Endothelial cell of umbilical vein (primary cell): ENCODE measurements at regions of chr20 and their contacts with region 1.

Region 1: DNA sequence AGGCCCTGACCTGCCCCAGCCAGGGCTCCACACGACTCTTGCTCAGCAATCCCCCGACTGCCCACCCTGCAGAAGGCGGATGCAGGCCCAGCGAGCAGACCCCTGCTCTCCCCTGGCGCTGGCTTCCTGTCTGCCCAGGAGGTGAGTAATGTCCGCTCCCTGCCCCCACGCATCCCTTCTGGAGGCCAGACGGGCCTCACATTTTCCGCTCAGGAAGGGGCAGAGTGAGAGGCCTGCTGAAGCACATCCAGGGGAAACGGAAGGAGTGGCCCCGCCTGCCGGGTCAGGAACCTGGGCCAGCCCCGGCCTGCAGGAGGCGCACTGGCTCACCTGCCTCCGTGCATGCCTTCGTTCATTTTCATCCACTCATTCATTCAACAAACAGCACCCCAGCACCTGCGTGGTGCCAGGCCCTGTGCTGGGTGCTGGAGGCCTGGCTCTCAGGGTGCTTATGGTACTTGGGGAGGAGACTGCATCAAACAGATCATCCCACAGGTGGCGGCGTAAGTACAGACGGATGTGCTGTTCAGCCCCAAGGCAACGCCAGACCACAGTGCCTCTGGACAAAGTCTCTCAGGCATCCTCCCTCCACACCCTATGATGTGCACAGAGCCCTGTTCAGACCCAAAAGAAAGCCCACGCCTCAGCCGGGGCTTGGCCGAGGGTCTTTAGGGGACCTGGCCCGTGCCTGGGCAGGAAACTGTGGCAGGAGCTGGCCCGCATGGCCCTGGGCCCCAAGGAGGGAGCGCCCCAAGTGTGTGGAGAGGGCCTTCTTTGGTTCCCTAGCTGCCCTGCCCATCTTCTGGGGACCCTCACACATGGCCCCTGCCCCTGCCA is 112.1 kb downstream of the ASXL1 start:
- DNase-seq: peak; percentile 99
- H3K4me3 ChIP-seq: no peak overlapping the region
- H3K27ac ChIP-seq: peak overlapping the region; percentile 97
- H3K4me1 ChIP-seq: peaks cover 94% of the 10 kb centered on the region
- H3K27me3 ChIP-seq: no peaks in the 10 kb centered on the region
- CTCF ChIP-seq: peak; percentile 95 to 97
- POLR2A ChIP-seq: peak; percentile 79

Region 2: DNA sequence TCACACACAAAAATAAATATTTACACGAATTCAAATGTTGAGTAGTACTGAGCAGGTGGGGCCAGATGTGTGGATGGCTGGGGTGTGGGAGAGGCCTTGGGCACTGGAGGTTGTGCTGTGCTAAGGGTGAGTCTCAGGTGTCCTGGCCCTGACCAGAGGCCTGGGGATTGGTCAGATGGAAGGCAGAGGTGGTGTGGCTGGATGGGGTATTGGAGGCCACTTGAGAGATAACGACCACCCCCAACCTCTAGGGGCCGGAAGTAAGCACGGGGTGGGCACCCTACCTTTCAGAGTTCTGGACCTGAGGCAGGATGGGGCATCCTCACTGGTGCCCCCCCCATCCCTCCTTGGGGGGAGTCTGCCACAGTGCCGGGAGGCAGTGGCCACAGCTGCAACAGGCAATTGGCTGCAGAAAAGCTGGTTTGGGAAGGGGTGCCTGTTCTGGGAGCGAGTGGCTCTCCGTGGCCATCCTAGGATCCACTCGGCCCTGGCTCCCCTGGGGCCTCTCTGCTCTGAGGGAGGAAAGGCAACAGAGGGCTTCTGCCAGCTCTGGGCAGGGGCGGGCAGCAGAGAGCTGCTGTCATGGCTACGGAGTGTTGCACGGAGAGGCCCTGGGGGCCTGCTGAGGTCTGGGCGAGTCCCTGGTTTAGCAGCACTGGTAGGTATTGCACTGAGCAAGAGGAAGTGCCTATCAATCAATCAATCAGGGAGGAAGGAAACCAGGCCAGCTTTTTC is 24.5 kb before region 1 on chr20:
- CTCF ChIA-PET with region 1: interaction called, 5 read pairs
- POLR2A ChIA-PET with region 1: no interaction called
- dilution Hi-C with region 1: no loop called
- intact Hi-C with region 1: loop called (anchors 1 kb)
- DNase-seq: no peak
- H3K4me3 ChIP-seq: no peak overlapping the region
- H3K27ac ChIP-seq: no peak overlapping the region
- H3K4me1 ChIP-seq: peaks cover 14% of the 10 kb centered on the region
- H3K27me3 ChIP-seq: no peaks in the 10 kb centered on the region
- CTCF ChIP-seq: no peak
- POLR2A ChIP-seq: no peak

Region 3: DNA sequence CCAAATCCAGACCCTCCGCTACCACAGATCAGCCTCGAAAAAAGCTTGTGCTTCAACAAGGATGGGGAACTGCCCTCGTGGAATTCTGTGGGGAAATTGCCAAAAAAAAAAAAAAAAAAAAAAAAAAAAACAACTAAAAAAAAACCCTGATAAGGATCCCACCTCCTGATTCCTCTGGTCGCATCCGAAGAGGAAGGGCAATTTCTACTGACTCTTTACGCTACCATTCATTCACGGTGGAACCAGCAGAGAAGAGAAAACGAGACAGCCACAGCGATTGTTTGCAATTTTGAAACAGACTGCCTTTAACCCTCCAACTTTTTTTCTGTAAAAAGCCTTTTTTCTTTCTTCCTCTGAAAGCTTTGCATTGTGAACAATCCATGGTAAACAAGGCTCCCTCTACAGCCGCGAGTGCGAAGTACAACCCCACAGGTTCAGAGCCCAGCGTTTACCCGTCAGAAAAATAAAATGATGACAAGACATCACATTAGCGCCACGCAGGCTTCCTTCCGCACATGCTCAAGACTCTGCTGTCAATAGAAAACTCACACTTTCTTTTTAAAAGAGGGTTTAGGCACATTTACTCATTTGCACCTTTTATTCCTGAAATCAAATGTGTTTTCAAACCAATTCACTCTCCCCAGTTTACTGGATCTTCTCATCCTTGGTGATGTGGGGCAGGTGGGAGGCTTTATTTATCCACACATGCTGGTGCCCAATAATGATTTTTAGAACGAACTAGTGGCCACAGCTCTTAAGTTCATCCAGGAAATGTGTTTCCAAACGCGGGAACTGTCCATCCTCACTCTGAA is 14.9 kb after region 1 on chr20:
- CTCF ChIA-PET with region 1: interaction called, 45 read pairs
- POLR2A ChIA-PET with region 1: interaction called, 8 read pairs
- dilution Hi-C with region 1: no loop called
- intact Hi-C with region 1: loop called (anchors 1 kb)
- DNase-seq: peak; percentile 91
- H3K4me3 ChIP-seq: peak overlapping the region; percentile 37 to 66 (median 60)
- H3K27ac ChIP-seq: peak overlapping the region; percentile 96
- H3K4me1 ChIP-seq: peaks cover 33% of the 10 kb centered on the region
- H3K27me3 ChIP-seq: no peaks in the 10 kb centered on the region
- CTCF ChIP-seq: peak; percentile 71 to 74
- POLR2A ChIP-seq: no peak

Region 4: DNA sequence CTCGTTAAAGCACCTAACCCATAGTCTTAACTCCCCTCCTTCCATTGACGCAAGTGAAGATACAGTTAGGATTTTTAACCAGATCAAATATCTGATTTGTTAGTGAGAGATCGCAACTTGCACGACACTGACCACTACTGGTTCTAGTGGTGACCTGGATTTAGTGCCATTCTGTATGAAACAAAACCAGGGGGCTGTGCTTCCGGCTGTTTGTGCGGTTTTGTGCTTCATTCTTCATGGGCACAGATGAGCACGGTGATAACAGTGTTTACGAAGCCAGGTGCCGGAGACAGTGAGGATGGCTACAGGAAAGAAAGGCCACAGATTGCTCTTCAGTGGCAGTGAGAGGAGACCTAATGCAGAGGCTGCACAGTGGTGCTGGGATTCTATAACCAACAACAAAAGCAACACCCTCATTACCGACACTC is 39.4 kb after region 1 on chr20:
- CTCF ChIA-PET with region 1: interaction called, 5 read pairs
- POLR2A ChIA-PET with region 1: no interaction called
- dilution Hi-C with region 1: no loop called
- intact Hi-C with region 1: loop called (anchors 2 kb)
- DNase-seq: peak; percentile 71
- H3K4me3 ChIP-seq: no peak overlapping the region
- H3K27ac ChIP-seq: peak overlapping the region; percentile 9
- H3K4me1 ChIP-seq: peaks cover 24% of the 10 kb centered on the region
- H3K27me3 ChIP-seq: no peaks in the 10 kb centered on the region
- CTCF ChIP-seq: peak; percentile 53 to 63
- POLR2A ChIP-seq: no peak

Region 5: GRCh38 chr20:32521780-32522525 is 51.7 kb after region 1 on chr20:
- CTCF ChIA-PET with region 1: interaction called, 11 read pairs
- POLR2A ChIA-PET with region 1: no interaction called
- dilution Hi-C with region 1: no loop called
- intact Hi-C with region 1: loop called (anchors 1 kb)
- DNase-seq: peak; percentile 53
- H3K4me3 ChIP-seq: no peak overlapping the region
- H3K27ac ChIP-seq: no peak overlapping the region
- H3K4me1 ChIP-seq: peaks cover 16% of the 10 kb centered on the region
- H3K27me3 ChIP-seq: no peaks in the 10 kb centered on the region
- CTCF ChIP-seq: peak; percentile 86 to 90
- POLR2A ChIP-seq: no peak